CD8-positive, alpha-beta T cell (primary cell): ENCODE measurements at regions of chr10 and their contacts with region 1.

Region 1: DNA sequence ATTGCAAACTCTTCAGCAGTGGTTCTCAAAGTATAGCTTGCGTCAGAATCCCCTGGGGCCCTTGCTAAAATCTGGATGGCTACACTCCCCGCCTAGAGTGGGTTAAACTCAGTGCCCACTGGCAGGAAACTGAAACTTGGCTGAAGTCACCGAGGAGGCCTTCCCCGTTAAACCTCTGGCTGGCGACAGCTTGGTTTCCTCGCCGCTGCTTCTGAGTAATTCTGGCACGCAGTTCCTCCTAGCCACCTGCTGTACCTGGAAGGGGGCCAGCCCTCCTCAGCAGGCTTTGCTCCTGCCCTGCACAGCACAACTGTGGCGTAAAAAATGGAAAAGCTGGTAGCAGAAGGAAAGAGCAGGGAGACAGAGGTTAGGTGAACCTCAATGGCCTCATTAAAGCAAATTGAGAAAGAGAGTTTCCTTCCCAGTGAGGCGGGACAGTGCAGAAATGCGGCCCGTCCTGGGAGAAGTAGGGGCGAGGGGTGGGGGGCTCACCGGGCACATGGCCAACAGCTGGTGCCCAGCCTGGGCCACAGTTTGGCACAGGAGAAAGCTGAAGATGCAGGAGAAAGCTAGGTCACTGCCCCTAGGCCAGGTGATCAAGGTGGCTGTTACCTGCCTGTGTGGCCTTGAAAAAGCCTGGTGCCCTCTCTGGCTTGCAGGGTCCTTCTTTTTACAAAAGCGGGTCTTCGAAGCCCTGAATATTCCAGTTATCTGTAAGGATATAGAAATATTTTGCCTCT is 46.6 kb downstream of the ALOX5 start:
- DNase-seq: peak in 8 of 9 experiments; percentile 42 to 76 (median 66)
- ATAC-seq: peak; percentile 47
- H3K4me3 ChIP-seq: peak overlapping the region; percentile 27 to 88
- H3K4me3 Mint-ChIP-seq: peak overlapping the region; percentile 92
- H3K27ac ChIP-seq: peak overlapping the region; percentile 52 to 65
- H3K27ac Mint-ChIP-seq: peak overlapping the region; percentile 98
- H3K4me1 ChIP-seq: peaks cover 53% of the 10 kb centered on the region
- H3K4me1 Mint-ChIP-seq: peaks cover 61% of the 10 kb centered on the region
- H3K27me3 ChIP-seq: no peaks in the 10 kb centered on the region
- H3K27me3 Mint-ChIP-seq: no peaks in the 10 kb centered on the region
- CTCF ChIP-seq: no peak

Region 2: GRCh38 chr10:45513551-45513950 is 92.9 kb after region 1 on chr10:
- CTCF ChIA-PET with region 1: no interaction called
- POLR2A ChIA-PET with region 1: no interaction called
- intact Hi-C with region 1: no loop called
- DNase-seq: no peak
- ATAC-seq: no peak
- H3K4me3 ChIP-seq: no peak overlapping the region
- H3K4me3 Mint-ChIP-seq: no peak overlapping the region
- H3K27ac ChIP-seq: no peak overlapping the region
- H3K27ac Mint-ChIP-seq: no peak overlapping the region
- H3K4me1 ChIP-seq: no peaks in the 10 kb centered on the region
- H3K4me1 Mint-ChIP-seq: peaks cover 30% of the 10 kb centered on the region
- H3K27me3 ChIP-seq: no peaks in the 10 kb centered on the region
- H3K27me3 Mint-ChIP-seq: no peaks in the 10 kb centered on the region
- CTCF ChIP-seq: no peak

Region 3: GRCh38 chr10:45672181-45673073 is 251.8 kb after region 1 on chr10 and contains the start of gene ZFAND4:
- CTCF ChIA-PET with region 1: interaction called, 3 read pairs
- POLR2A ChIA-PET with region 1: no interaction called
- intact Hi-C with region 1: loop called in 1 of 2 experiments (anchors 2 kb)
- DNase-seq: peak; percentile 88 to 98 (median 93)
- ATAC-seq: peak; percentile 97
- H3K4me3 ChIP-seq: peak within 1 kb of the TSS; percentile 82 to 88
- H3K4me3 Mint-ChIP-seq: peak within 1 kb of the TSS; percentile 90
- H3K27ac ChIP-seq: peak within 1 kb of the TSS; percentile 69 to 86
- H3K27ac Mint-ChIP-seq: peak within 1 kb of the TSS; percentile 90
- H3K4me1 ChIP-seq: peaks cover 5% of the 10 kb centered on the region
- H3K4me1 Mint-ChIP-seq: peaks cover 45% of the 10 kb centered on the region
- H3K27me3 ChIP-seq: no peaks in the 10 kb centered on the region
- H3K27me3 Mint-ChIP-seq: no peaks in the 10 kb centered on the region
- CTCF ChIP-seq: peak; percentile 20
- total RNA-seq, gene ZFAND4: 34.7 to 36.6 TPM

Region 4: DNA sequence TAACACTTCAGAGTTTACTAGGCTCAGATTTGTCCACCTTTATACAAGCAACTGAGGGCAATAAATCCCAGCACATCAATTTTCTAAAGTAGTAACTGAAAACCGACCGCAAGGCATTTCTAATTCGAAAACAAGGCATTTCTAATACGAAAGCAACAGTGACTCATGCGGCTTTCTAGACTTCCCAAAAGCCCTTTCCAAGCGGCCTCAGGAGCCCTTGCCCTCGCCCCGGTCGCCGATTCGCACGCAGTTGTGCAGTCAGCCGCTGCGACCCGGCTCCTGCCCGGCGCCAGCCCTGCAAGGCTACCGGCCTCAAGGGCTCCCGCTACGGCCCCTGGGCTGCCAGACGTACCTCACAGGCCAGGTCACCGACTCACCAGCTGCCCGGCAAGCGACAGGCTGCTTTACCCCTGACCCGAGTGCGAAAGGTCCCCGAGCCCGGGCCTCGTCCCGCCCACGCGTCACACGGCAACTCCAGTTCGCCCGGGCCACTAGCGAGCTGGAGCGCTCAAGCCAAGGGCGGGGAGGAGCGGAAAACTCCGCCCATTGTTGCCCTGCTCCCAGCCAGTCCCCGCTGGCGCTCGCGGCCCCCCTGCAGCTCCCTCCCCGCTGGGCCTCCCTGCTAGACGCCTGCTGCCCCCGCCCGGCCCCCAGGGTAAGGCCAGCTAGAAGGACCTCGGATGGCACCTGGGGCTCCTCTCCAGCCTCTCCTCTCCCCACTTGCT is 602.5 kb after region 1 on chr10:
- CTCF ChIA-PET with region 1: no interaction called
- POLR2A ChIA-PET with region 1: no interaction called
- intact Hi-C with region 1: loop called in 1 of 2 experiments (anchors 10 kb)
- DNase-seq: peak; percentile 51 to 90 (median 81)
- ATAC-seq: peak; percentile 97
- H3K4me3 ChIP-seq: peak overlapping the region; percentile 64 to 70
- H3K4me3 Mint-ChIP-seq: peak overlapping the region; percentile 85
- H3K27ac ChIP-seq: peak overlapping the region; percentile 31 to 34
- H3K27ac Mint-ChIP-seq: peak overlapping the region; percentile 89
- H3K4me1 ChIP-seq: peaks cover 78% of the 10 kb centered on the region
- H3K4me1 Mint-ChIP-seq: peaks cover 88% of the 10 kb centered on the region
- H3K27me3 ChIP-seq: no peaks in the 10 kb centered on the region
- H3K27me3 Mint-ChIP-seq: no peaks in the 10 kb centered on the region
- CTCF ChIP-seq: no peak